Vagina (tissue), 2 donors: ENCODE measurements at regions of chr11 and their contacts with region 1.

Region 1: DNA sequence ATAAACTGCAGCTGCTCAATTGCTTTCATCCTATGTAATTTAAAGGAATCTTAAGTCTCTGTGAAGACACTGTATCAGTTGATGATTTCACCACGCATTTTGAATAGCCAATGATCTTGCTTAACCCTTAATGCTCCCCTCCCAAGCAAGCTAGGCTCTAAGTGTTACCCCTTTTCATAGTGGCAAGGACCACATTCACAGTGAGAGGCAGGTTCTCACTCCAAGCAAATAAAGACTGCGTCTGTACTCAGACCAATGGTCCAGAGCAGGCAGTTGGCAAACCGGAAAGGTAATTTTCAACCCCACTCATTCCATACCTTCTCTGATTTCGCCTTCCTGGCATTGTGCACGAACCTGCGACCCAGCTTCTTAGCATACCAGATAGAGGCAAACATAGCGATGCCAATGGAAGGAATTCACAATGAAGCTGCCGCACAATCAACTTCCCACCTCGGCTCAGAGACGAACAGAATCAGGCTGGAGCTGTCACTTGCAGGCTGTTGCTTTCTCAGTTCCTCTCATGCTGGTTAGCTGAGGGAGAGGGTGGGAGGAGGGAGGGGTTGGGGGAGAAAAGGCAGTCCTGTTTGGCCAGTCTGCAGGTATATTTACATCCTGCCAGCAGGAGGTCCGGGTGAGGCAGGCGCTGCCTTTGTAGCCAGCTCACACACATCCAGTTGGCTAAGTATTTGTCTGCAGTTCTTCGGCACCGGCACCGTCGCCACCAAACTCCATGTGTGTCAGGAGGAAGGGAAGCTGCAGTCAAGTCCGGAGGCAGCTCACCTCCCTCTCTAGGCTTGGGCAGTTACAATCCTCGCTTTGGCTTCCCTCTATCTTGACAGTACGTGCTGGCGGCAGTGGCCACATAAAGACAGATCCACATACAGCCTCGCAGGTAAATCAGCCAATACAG is 1151.2 kb upstream of the CCDC90B start:
- DNase-seq: no peak
- H3K4me3 ChIP-seq: no peak overlapping the region
- H3K27ac ChIP-seq: no peak overlapping the region
- H3K4me1 ChIP-seq: no peaks in the 10 kb centered on the region
- H3K27me3 ChIP-seq: no peaks in the 10 kb centered on the region
- CTCF ChIP-seq: no peak
- POLR2A ChIP-seq: no peak

Region 2: DNA sequence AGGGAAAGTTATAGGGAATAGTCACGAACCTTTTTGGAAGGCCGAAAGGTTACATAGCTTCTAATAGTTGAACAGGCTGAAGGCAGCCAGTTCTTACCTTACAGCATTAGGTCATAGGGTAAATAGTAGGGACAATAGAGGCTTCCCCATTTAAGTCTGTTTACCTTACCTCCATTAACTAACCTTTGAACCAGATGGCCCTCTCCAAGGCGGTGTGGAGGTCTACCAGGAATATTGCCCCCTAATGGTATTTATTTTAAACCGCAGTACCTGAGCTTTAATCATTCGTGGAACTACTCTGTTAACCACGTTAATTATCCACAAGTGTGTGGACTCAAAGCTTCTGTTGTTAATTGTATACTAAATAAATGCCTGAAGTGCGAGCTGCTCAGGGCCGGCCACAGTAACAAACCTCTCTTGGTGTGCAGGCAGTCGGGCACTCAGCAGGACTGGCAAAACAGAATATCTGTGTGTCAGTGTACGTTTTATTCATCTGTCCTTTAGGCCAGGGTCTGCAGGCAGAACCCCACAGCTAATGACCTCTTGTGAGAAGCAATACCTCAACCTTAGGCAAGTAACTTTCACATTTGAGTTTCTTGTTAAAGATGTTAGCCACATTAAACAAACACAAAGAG is 1618.8 kb before region 1 on chr11:
- intact Hi-C with region 1: no loop called
- DNase-seq: no peak
- H3K4me3 ChIP-seq: no peak overlapping the region
- H3K27ac ChIP-seq: no peak overlapping the region
- H3K4me1 ChIP-seq: no peaks in the 10 kb centered on the region
- H3K27me3 ChIP-seq: no peaks in the 10 kb centered on the region
- CTCF ChIP-seq: no peak
- POLR2A ChIP-seq: no peak

Region 3: GRCh38 chr11:84922836-84923235 is 485.5 kb after region 1 on chr11:
- intact Hi-C with region 1: loop called (anchors 5 kb)
- DNase-seq: no peak
- H3K4me3 ChIP-seq: no peak overlapping the region
- H3K27ac ChIP-seq: no peak overlapping the region
- H3K4me1 ChIP-seq: peaks cover 5% of the 10 kb centered on the region
- H3K27me3 ChIP-seq: no peaks in the 10 kb centered on the region
- CTCF ChIP-seq: no peak
- POLR2A ChIP-seq: no peak